Uterus (tissue), 4 donors: ENCODE measurements at regions of chr13 and their contacts with region 1.

Region 1: DNA sequence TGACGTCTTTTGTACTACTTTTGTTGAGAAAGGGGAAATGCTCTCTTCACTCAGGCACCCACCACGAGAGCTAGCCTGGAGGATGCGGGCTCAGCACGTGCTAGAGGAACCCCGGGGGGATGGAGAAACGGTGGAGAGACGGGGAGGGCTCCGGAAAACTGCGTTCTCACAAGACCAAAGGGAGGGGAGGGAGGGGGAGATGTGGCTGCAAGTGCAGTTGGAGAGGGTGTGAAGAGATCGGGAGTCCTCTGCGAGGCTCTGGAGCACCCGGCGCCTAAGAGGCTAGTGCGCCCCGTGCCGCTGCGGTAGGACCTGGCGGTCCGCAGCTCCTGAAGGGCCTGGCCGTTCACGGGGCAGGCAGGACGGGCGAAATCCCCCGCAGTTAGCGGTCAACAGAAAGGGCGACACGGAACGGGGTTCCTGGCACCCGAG is 43.4 kb upstream of the XPO4 start:
- DNase-seq: no peak
- H3K4me3 ChIP-seq: no peak overlapping the region
- H3K27ac ChIP-seq: no peak overlapping the region
- H3K4me1 ChIP-seq: no peaks in the 10 kb centered on the region
- H3K27me3 ChIP-seq: no peaks in the 10 kb centered on the region
- CTCF ChIP-seq: no peak
- POLR2A ChIP-seq: no peak

Region 2: DNA sequence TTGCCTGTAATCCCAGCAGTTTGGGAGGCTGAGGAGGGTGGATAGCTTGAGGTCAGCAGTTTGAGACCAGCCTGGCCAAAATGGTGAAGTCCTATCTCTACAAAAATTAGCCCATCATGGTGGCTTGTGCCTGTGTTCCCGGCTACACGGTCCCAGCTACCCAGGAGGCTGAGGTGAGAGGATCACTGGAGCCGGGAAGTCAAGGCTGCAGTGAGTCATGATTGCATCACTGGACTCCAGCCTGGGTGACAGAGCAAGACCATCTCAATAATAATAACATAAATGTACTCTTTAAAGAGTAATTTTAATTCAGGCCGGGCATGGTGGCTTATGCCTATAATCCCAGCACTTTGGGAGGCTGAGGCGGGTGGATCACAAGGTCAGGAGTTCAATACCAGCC is 191.7 kb after region 1 on chr13:
- intact Hi-C with region 1: loop called (anchors 10 kb)
- DNase-seq: no peak
- H3K4me3 ChIP-seq: no peak overlapping the region
- H3K27ac ChIP-seq: no peak overlapping the region
- H3K4me1 ChIP-seq: peaks cover 9 to 11% of the 10 kb centered on the region in 2 donors
- H3K27me3 ChIP-seq: no peaks in the 10 kb centered on the region
- CTCF ChIP-seq: no peak
- POLR2A ChIP-seq: no peak